ENCODE measurements at regions of chr6 and their contacts with region 1.

Region 1: DNA sequence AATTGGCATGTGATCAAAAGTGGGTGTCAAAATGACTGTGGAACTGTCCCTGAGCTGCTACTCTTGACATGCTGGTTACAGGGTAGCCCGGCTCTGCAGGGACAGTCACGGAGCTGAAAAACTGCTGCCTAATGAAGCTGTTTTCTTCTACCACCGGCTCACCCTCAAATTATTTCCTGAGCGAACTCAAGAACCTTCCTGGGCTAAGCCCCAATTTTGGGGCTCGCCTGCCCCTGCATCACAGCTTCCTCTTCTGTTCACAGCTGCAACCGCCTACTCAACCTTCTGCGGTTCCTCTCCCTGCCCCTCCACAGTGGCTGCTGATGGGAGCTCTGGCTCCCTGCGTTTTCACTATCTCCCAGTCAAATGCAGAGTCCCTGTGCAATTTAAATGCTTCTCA is 110.8 kb upstream of the MLN start:
- DNase-seq: peak in 8 of 10 donors; percentile 21 to 56 (median 47)
- ATAC-seq: peak; percentile 96 to 98
- H3K4me3 Mint-ChIP-seq: peak overlapping the region; percentile 26 to 86 (median 76)
- H3K27ac Mint-ChIP-seq: peak overlapping the region; percentile 23 to 94 (median 82)
- H3K4me1 Mint-ChIP-seq: peaks cover 32 to 58% (median 55%) of the 10 kb centered on the region in 4 donors
- H3K27me3 Mint-ChIP-seq: no peaks in the 10 kb centered on the region

Region 2: GRCh38 chr6:33788694-33789549 is 125.7 kb before region 1 on chr6 and contains the start of gene LEMD2:
- POLR2A ChIA-PET with region 1: interaction called, 10 read pairs
- DNase-seq: peak; percentile 87 to 94 (median 92)
- ATAC-seq: peak; percentile 89 to 90
- H3K4me3 Mint-ChIP-seq: peak within 1 kb of the TSS; percentile 91 to 99 (median 96)
- H3K27ac Mint-ChIP-seq: peak within 1 kb of the TSS; percentile 95 to 100 (median 98)
- H3K4me1 Mint-ChIP-seq: peaks cover 37 to 57% (median 49%) of the 10 kb centered on the region in 4 donors
- H3K27me3 Mint-ChIP-seq: peaks cover 0 to 2% (median 0%) of the 10 kb centered on the region in 5 donors
- polyA plus RNA-seq, gene LEMD2: 24.6 to 43.9 (median 26.0) TPM

Region 3: DNA sequence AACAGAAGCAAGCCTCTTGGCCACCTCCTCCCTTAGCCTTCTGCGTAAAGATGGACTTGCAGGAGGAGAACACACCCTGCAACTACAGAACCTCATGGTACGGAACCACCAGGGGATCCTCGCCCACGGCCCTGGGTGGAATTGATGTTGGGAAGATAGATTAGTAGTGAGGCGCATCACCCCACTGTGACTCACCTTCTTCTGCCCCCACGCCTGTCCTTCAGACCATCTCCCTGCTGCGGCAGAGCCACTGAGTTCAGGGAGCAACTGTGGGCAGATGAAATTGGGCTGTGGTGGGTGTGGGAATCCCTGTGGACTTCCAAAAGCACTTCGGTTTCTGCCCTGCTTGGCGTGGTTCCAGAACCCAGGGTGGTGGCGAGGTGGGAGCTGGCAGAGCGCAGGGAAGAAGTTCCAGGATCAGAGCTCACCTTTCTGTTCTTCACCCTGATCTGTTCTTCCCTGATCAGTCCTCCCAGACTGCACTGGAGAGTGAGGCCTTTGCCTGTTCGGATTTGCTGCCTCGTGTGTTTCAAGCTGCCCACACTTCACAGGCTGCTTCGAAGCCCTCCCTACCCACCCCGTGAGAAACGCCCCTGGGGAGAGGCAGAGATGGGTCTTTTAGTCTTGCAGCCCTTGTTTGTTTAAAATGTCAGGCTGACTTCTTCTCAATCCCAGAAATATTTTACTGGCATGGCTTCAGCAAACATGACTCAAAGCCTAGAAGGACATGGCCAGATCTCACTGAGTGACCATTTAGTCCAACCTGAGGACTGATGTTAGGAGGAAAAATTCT is 18.1 kb before region 1 on chr6:
- POLR2A ChIA-PET with region 1: interaction called, 10 read pairs
- DNase-seq: no peak
- ATAC-seq: no peak
- H3K4me3 Mint-ChIP-seq: peak overlapping the region in 3 of 10 donors; percentile 6 to 34 (median 29)
- H3K27ac Mint-ChIP-seq: peak overlapping the region in 7 of 10 donors; percentile 11 to 97 (median 93)
- H3K4me1 Mint-ChIP-seq: peaks cover 26 to 64% (median 40%) of the 10 kb centered on the region in 4 donors
- H3K27me3 Mint-ChIP-seq: no peaks in the 10 kb centered on the region

Region 4: DNA sequence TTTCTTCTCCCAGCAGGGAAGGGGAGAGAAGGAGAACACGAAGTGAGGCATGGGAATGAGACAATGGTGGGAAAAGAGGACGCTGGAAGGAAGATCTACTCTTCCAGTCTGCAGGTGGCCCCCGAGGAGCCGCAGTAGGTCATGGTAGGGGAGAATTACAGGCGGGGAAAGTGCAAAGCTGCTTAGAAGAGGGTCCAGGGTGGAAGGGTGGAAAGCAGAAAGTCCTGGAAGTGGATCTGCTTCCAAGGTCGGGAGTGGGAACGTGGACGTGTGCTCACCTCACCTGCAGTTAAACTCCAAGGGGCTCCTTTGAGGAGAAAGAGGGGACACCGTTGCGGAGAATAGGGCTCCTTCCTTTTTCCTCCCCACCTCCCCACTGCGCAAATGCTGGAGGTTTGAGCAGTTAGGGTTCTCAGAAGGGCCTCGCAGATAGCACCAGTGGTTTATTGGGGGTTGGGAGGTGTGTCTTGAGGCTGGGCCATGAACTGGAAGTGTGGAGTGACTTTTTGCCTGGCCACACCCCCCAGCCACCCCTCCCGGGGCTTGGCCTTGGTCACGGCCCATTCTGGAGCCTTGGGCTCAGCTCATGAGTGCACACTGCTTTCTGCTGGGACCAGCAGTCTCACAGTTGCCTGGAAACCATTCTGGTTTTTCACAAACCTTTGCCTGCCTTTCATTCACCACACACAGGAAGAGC is 10.4 kb before region 1 on chr6:
- POLR2A ChIA-PET with region 1: interaction called, 23 read pairs
- DNase-seq: peak in 9 of 10 donors; percentile 32 to 89 (median 81)
- ATAC-seq: peak; percentile 88
- H3K4me3 Mint-ChIP-seq: peak overlapping the region; percentile 60 to 87 (median 76)
- H3K27ac Mint-ChIP-seq: peak overlapping the region; percentile 88 to 97 (median 93)
- H3K4me1 Mint-ChIP-seq: peaks cover 56 to 85% (median 80%) of the 10 kb centered on the region in 4 donors
- H3K27me3 Mint-ChIP-seq: no peaks in the 10 kb centered on the region

Region 5: DNA sequence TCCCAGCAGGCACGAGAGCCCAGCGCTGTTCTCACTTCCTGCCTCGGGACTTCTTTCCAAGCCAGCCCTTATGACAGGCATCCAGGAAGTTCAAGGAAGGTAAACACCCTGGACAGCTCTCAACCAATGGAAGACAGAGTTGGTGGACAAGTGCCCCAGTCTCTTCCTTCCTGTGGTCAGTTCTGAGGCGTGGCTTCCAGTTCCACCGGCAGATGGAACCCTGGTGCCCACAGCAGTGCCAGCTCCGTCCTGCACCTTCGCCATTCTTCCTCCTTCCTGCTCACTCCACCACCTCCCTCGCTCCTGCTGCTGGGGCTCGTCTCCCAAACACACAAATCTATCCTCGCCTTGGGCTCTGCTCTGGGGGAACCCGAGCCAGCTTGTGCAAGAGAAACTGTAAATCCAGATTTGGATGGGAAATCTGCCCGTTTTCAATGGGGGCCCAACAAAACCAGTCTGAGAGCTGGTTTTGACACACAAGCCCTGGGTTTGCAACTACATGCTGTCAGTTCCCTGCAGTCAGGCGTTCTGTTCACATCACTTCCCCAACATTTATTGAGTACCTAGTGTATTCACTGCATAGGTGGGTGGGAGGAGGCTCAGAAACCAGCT is 68.6 kb after region 1 on chr6:
- POLR2A ChIA-PET with region 1: no interaction called
- DNase-seq: no peak
- ATAC-seq: no peak
- H3K4me3 Mint-ChIP-seq: no peak overlapping the region
- H3K27ac Mint-ChIP-seq: peak overlapping the region in 2 of 10 donors; percentile 6 to 67
- H3K4me1 Mint-ChIP-seq: peaks cover 4 to 14% (median 11%) of the 10 kb centered on the region in 4 donors
- H3K27me3 Mint-ChIP-seq: peaks cover 0 to 12% (median 2%) of the 10 kb centered on the region in 5 donors

Measured in naive thymus-derived CD8-positive, alpha-beta T cell (primary cell).